CD4-positive, alpha-beta T cell (primary cell): ENCODE measurements at regions of chr17 and their contacts with region 1.

Region 1: GRCh38 chr17:4420692-4421131 is 13.0 kb upstream of the SPNS3 start:
- DNase-seq: peak; percentile 21 to 87 (median 42)
- ATAC-seq: peak; percentile 93
- H3K4me3 ChIP-seq: no peak overlapping the region
- H3K4me3 Mint-ChIP-seq: no peak overlapping the region
- H3K27ac ChIP-seq: no peak overlapping the region
- H3K27ac Mint-ChIP-seq: no peak overlapping the region
- H3K4me1 ChIP-seq: peaks cover 5% of the 10 kb centered on the region
- H3K4me1 Mint-ChIP-seq: no peaks in the 10 kb centered on the region
- H3K27me3 ChIP-seq: no peaks in the 10 kb centered on the region
- H3K27me3 Mint-ChIP-seq: no peaks in the 10 kb centered on the region
- CTCF ChIP-seq: peak; percentile 80

Region 2: GRCh38 chr17:4540224-4540641 is 119.5 kb after region 1 on chr17:
- CTCF ChIA-PET with region 1: no interaction called
- POLR2A ChIA-PET with region 1: no interaction called
- intact Hi-C with region 1: loop called in 1 of 2 experiments (anchors 2 kb)
- DNase-seq: no peak
- ATAC-seq: no peak
- H3K4me3 ChIP-seq: no peak overlapping the region
- H3K4me3 Mint-ChIP-seq: no peak overlapping the region
- H3K27ac ChIP-seq: no peak overlapping the region
- H3K27ac Mint-ChIP-seq: no peak overlapping the region
- H3K4me1 ChIP-seq: no peaks in the 10 kb centered on the region
- H3K4me1 Mint-ChIP-seq: no peaks in the 10 kb centered on the region
- H3K27me3 ChIP-seq: no peaks in the 10 kb centered on the region
- H3K27me3 Mint-ChIP-seq: no peaks in the 10 kb centered on the region
- CTCF ChIP-seq: no peak

Region 3: GRCh38 chr17:4565209-4566141 is 144.8 kb after region 1 on chr17:
- CTCF ChIA-PET with region 1: no interaction called
- POLR2A ChIA-PET with region 1: no interaction called
- intact Hi-C with region 1: loop called in 1 of 2 experiments (anchors 2 kb)
- DNase-seq: peak in 12 of 14 experiments; percentile 14 to 81 (median 30)
- ATAC-seq: peak; percentile 89
- H3K4me3 ChIP-seq: no peak overlapping the region
- H3K4me3 Mint-ChIP-seq: peak overlapping the region; percentile 13
- H3K27ac ChIP-seq: no peak overlapping the region
- H3K27ac Mint-ChIP-seq: no peak overlapping the region
- H3K4me1 ChIP-seq: peaks cover 19% of the 10 kb centered on the region
- H3K4me1 Mint-ChIP-seq: peaks cover 31% of the 10 kb centered on the region
- H3K27me3 ChIP-seq: no peaks in the 10 kb centered on the region
- H3K27me3 Mint-ChIP-seq: no peaks in the 10 kb centered on the region
- CTCF ChIP-seq: peak; percentile 92

Region 4: DNA sequence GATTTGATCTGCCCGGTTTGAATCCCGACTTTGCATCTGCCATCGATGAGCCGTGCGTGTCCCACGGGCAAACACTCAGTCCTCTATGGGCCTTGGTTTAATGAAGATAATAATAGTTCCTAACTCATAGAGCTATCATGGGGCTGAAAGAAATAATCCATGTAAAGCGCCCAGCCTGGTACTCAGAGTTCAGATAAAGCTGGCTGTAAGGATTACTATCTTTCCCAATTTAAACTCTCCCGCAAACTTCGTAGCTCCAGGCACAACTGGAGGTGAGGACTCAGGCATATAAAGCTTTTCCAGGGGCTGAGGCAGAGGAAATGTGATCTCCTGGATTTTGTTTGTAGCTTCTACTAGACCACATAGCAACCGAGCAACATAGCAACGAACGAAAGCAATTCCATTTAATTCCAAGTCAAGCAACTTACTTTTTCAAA is 204.5 kb after region 1 on chr17:
- CTCF ChIA-PET with region 1: no interaction called
- POLR2A ChIA-PET with region 1: no interaction called
- intact Hi-C with region 1: loop called (anchors 1 kb)
- DNase-seq: no peak
- ATAC-seq: no peak
- H3K4me3 ChIP-seq: no peak overlapping the region
- H3K4me3 Mint-ChIP-seq: no peak overlapping the region
- H3K27ac ChIP-seq: no peak overlapping the region
- H3K27ac Mint-ChIP-seq: no peak overlapping the region
- H3K4me1 ChIP-seq: peaks cover 3% of the 10 kb centered on the region
- H3K4me1 Mint-ChIP-seq: no peaks in the 10 kb centered on the region
- H3K27me3 ChIP-seq: no peaks in the 10 kb centered on the region
- H3K27me3 Mint-ChIP-seq: peaks cover 16% of the 10 kb centered on the region
- CTCF ChIP-seq: no peak

Region 5: DNA sequence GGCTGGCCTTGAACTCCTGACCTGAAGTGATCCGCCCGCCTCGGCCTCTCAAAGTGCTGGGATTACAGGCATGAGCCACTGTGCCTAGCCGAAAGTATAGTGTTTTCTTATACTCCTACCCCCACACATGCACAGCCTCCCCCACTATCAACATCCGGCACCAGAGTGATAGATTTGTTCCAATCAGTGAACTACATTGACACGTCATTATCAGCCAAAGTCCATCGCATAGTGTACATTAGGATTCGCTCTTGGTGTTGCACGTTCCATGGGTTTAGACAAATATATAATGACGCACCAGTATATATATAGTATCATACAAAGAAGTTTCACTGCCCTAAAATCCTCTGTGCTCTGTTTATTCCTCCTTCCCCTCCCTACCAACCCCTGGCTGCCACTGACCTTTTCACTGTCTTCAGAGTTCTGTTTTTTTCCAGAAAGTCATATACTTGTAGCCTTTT is 339.1 kb after region 1 on chr17:
- CTCF ChIA-PET with region 1: no interaction called
- POLR2A ChIA-PET with region 1: no interaction called
- intact Hi-C with region 1: no loop called
- DNase-seq: peak in 2 of 14 experiments; percentile 23
- ATAC-seq: no peak
- H3K4me3 ChIP-seq: no peak overlapping the region
- H3K4me3 Mint-ChIP-seq: no peak overlapping the region
- H3K27ac ChIP-seq: no peak overlapping the region
- H3K27ac Mint-ChIP-seq: no peak overlapping the region
- H3K4me1 ChIP-seq: no peaks in the 10 kb centered on the region
- H3K4me1 Mint-ChIP-seq: no peaks in the 10 kb centered on the region
- H3K27me3 ChIP-seq: peaks cover 5% of the 10 kb centered on the region in 2 experiments
- H3K27me3 Mint-ChIP-seq: peaks cover 25% of the 10 kb centered on the region
- CTCF ChIP-seq: no peak

Region 6: DNA sequence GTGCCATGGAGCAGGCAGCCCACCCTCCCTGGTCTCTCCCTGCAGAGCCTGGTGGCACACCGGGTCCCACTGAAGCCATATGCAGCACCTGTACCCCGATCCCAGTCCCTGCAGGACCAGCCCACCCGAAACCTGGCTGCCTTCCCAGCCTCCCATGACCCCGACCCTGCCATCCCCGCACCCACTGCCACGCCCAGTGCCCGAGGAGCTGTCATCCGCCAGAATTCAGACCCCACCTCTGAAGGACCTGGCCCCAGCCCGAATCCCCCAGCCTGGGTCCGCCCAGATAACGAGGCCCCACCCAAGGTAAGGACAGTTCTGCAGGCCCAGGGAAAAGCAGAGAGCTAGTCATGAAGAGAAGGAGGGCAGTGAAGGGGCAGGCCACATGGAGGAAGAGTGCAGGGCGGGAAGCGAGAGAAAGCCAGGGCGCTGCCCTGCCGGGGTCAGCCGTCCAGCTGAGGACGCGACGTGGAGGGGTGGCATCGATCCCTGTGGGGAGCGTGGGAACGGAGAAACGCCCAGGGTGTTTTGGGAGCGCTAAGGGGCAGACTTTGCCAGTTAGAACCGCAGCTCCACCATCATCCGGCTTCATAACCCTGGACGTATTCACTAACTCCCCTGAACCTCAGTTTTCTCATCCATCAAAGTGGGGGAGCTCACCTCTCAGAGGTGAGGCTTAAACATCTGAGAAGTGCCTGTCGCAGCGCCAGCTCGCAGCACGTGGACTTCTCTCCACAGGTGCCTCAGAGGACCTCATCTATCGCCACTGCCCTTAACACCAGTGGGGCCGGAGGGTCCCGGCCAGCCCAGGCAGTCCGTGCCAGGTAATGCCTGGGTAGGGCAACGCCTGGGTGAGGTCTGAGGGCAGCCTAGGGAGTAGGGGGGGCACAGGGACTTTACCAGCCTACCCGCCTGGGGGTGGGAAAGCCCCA is 471.0 kb after region 1 on chr17:
- CTCF ChIA-PET with region 1: no interaction called
- POLR2A ChIA-PET with region 1: no interaction called
- intact Hi-C with region 1: loop called in 1 of 2 experiments (anchors 1 kb)
- DNase-seq: peak in 1 of 14 experiments; percentile 31
- ATAC-seq: no peak
- H3K4me3 ChIP-seq: no peak overlapping the region
- H3K4me3 Mint-ChIP-seq: no peak overlapping the region
- H3K27ac ChIP-seq: no peak overlapping the region
- H3K27ac Mint-ChIP-seq: no peak overlapping the region
- H3K4me1 ChIP-seq: peaks cover 2% of the 10 kb centered on the region
- H3K4me1 Mint-ChIP-seq: peaks cover 5% of the 10 kb centered on the region
- H3K27me3 ChIP-seq: no peaks in the 10 kb centered on the region
- H3K27me3 Mint-ChIP-seq: no peaks in the 10 kb centered on the region
- CTCF ChIP-seq: no peak